Body of pancreas (tissue), 4 donors: ENCODE measurements at regions of chr19 and their contacts with region 1.

Region 1: DNA sequence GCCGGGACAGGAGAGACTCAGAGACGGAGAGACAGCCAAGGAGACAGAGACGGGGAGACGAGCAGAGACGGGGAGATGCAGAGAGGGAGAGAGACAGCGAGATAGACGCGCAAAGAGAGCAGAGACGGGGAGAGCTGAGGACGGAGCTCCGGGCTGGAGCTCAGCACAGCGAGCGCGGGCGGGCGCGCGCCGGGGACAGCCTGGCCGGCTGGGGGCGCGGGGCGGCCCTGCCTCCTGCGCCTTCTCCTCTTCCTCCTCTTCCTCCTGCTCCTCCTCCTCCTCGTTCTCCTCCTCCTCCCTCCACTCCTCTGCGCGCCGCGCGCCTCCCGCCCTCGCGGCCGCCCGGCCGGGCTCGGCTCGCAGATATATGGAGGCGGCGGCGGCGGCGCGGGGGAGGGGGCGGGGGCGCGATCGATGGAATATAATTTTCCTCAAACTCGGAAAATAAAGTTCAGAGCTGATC is at the start of gene ERFL:
- DNase-seq: no peak
- ATAC-seq: peak; percentile 46
- H3K4me3 ChIP-seq: peak within 1 kb of the TSS; percentile 1 to 36
- H3K27ac ChIP-seq: no peak within 1 kb of the TSS
- H3K4me1 ChIP-seq: peaks cover 29% of the 10 kb centered on the region
- H3K27me3 ChIP-seq: no peaks in the 10 kb centered on the region
- CTCF ChIP-seq: no peak
- POLR2A ChIP-seq: no peak
- total RNA-seq, gene ERFL: not detected

Region 2: DNA sequence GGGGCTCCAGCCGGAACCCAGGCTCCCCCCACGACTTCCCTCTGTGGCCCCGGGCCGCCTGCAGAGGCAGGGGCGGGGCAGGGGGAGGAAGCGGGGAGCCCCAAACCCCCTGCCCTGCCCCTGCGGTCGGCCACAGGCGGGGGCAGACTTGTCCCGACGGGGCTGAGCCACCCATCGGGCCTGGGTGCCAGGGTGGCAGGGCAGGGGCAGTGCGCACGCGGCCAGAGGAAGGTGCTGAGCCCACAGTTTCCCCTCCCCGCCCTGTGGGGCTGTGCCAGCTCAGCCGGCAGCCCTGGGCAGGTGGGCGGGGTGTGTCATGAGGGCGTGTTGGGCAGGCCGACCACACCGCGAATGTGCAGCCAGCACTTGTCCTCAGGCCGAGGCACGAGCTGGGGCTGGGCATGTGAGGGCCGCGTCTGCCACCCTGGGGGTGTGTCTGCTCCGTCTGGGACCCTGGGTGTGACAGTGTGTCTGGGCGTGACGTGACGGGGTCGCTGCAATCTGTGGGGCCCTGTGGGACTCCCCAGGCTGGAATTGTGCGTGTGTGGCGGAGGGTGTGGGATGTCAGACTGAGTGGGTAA is 600.6 kb before region 1 on chr19:
- intact Hi-C with region 1: no loop called
- DNase-seq: peak; percentile 76 to 88 (median 86)
- ATAC-seq: peak; percentile 79
- H3K4me3 ChIP-seq: no peak overlapping the region
- H3K27ac ChIP-seq: peak overlapping the region; percentile 32 to 80 (median 70)
- H3K4me1 ChIP-seq: peaks cover 46% of the 10 kb centered on the region
- H3K27me3 ChIP-seq: no peaks in the 10 kb centered on the region
- CTCF ChIP-seq: no peak
- POLR2A ChIP-seq: peak; percentile 24 to 59 (median 39)

Region 3: DNA sequence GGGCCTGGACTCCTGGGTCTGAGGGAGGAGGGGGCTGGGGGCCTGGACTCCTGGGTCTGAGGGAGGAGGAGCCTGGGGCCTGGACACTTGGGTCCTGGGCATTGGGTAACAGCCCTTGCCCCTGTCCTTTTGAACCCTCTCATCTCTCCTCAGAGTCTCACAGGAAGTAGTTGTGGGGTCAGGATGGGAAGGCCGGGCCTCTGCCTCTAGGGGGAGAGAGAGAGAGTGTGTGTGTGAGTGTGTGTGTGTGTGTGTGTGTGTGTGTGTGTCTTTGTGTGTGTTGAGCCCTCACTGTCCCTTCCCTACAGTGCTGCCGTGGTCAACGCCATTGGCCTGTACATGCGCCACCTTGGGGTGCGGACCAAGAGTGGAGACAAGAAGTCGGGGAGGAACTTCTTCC is 34.4 kb before region 1 on chr19:
- intact Hi-C with region 1: loop called (anchors 5 kb)
- DNase-seq: no peak
- ATAC-seq: no peak
- H3K4me3 ChIP-seq: no peak overlapping the region
- H3K27ac ChIP-seq: no peak overlapping the region
- H3K4me1 ChIP-seq: no peaks in the 10 kb centered on the region
- H3K27me3 ChIP-seq: no peaks in the 10 kb centered on the region
- CTCF ChIP-seq: no peak
- POLR2A ChIP-seq: no peak

Region 4: DNA sequence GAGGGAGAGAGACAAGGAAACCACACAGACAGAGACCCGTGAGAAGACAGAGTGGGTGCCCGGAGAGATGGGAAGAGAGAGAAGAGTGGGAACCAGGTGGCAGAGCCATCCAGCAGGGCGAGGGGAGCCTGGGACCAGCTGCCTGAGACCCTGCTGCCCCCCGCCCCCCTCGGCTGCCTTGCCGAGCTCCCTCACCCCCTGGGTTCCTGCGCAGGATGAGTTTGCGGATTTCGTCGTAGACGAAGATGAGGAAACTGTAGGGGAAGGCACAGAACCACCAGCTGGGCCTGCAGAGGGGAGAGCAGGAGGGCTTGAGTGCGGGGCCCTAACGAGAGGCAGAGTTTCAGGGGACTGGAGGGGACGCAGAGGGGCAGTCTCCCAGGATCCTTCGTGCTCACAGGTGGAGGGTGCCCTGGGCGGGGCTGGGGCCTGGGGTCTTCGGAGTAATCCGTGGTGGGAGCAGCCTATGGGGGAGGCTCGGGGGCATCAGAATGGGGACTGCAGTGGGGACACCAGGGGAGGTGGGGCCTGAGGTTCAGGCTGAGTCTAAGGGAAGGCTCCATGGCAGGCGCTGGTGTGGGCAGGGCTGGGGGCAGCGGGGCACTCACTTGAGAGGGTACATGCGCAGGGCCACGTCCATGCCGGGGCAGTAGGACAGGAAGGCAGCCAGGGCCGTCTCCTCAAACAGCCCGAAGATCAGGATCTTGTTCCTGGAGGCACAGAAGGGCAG is 39.0 kb after region 1 on chr19:
- intact Hi-C with region 1: no loop called
- DNase-seq: no peak
- ATAC-seq: no peak
- H3K4me3 ChIP-seq: no peak overlapping the region
- H3K27ac ChIP-seq: no peak overlapping the region
- H3K4me1 ChIP-seq: no peaks in the 10 kb centered on the region
- H3K27me3 ChIP-seq: no peaks in the 10 kb centered on the region
- CTCF ChIP-seq: no peak
- POLR2A ChIP-seq: no peak